ENCODE measurements at regions of chr15 and their contacts with region 1.

Region 1: DNA sequence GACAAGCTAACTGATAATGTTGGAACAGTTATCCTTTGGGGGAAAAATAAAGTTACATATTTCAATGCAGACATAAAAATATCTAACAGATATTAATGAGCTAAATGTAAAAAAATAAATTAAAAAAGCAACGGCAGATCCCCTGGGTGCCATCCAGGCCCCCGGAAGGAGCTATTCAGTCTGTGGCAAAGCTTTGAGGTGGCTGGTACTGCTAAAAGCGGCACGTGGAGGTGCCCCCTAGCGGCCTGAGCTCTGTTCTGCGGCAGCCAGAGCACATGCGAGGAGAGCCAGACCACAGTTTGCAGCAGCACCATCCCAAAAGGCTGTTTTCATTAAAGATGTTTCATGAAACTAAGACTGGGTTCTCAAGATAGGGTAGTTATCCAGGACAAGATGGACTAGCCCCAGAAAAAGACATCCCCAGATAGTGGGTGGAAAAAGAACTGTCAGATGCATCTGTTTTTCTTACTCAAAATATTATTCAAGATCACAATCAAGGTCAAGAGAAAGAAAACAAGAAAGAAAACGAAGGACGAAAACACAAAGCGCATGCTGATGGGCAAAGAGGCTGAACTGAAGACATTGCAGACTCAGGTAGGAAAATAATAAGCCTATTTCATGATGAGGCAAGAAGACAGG is 18.7 kb downstream of the AP3S2 start:
- DNase-seq: no peak
- ATAC-seq: peak; percentile 100
- H3K4me3 ChIP-seq: no peak overlapping the region
- H3K27ac ChIP-seq: no peak overlapping the region
- H3K4me1 ChIP-seq: no peaks in the 10 kb centered on the region
- H3K27me3 ChIP-seq: no peaks in the 10 kb centered on the region
- CTCF ChIP-seq: peak; percentile 92 to 98 (median 97)
- EP300 ChIP-seq: no peak
- POLR2A ChIP-seq: no peak
- RAD21 ChIP-seq: peak; percentile 84

Region 2: GRCh38 chr15:89740137-89740536 is 134.9 kb before region 1 on chr15:
- CTCF ChIA-PET with region 1: interaction called, 113 read pairs
- POLR2A ChIA-PET with region 1: no interaction called
- RAD21 ChIA-PET with region 1: interaction called, 55 read pairs
- SMC1A ChIA-PET with region 1: interaction called, 24 read pairs
- in situ Hi-C with region 1: no loop called
- intact Hi-C with region 1: loop called (anchors 1 kb)
- DNase-seq: peak; percentile 43
- ATAC-seq: peak; percentile 98
- H3K4me3 ChIP-seq: no peak overlapping the region
- H3K27ac ChIP-seq: no peak overlapping the region
- H3K4me1 ChIP-seq: no peaks in the 10 kb centered on the region
- H3K27me3 ChIP-seq: no peaks in the 10 kb centered on the region
- CTCF ChIP-seq: peak; percentile 86 to 91 (median 91); a peak in 5 of 6 replicates
- EP300 ChIP-seq: no peak
- POLR2A ChIP-seq: no peak
- RAD21 ChIP-seq: peak; percentile 82

Region 3: GRCh38 chr15:89760303-89761008 is 114.6 kb before region 1 on chr15:
- CTCF ChIA-PET with region 1: interaction called, 380 read pairs
- POLR2A ChIA-PET with region 1: interaction called, 7 read pairs
- RAD21 ChIA-PET with region 1: interaction called, 179 read pairs
- SMC1A ChIA-PET with region 1: interaction called, 132 read pairs
- in situ Hi-C with region 1: loop called (anchors 5 kb)
- intact Hi-C with region 1: loop called (anchors 1 kb)
- DNase-seq: no peak
- ATAC-seq: peak; percentile 97
- H3K4me3 ChIP-seq: no peak overlapping the region
- H3K27ac ChIP-seq: no peak overlapping the region
- H3K4me1 ChIP-seq: peaks cover 11% of the 10 kb centered on the region
- H3K27me3 ChIP-seq: no peaks in the 10 kb centered on the region
- CTCF ChIP-seq: peak; percentile 93 to 97 (median 97)
- EP300 ChIP-seq: no peak
- POLR2A ChIP-seq: no peak
- RAD21 ChIP-seq: peak; percentile 94

Region 4: GRCh38 chr15:89781891-89782618 is 93.0 kb before region 1 on chr15:
- CTCF ChIA-PET with region 1: interaction called, 27 read pairs
- POLR2A ChIA-PET with region 1: interaction called, 3 read pairs
- RAD21 ChIA-PET with region 1: interaction called, 15 read pairs
- SMC1A ChIA-PET with region 1: interaction called, 13 read pairs
- in situ Hi-C with region 1: no loop called
- intact Hi-C with region 1: no loop called
- DNase-seq: no peak
- ATAC-seq: peak; percentile 69
- H3K4me3 ChIP-seq: 0 out of 2 replicates have a peak overlapping the region, but pooled peaks have one; percentile 24
- H3K27ac ChIP-seq: no peak overlapping the region
- H3K4me1 ChIP-seq: peaks cover 23% of the 10 kb centered on the region
- H3K27me3 ChIP-seq: no peaks in the 10 kb centered on the region
- CTCF ChIP-seq: no peak
- EP300 ChIP-seq: no peak
- POLR2A ChIP-seq: no peak
- RAD21 ChIP-seq: no peak

Region 5: DNA sequence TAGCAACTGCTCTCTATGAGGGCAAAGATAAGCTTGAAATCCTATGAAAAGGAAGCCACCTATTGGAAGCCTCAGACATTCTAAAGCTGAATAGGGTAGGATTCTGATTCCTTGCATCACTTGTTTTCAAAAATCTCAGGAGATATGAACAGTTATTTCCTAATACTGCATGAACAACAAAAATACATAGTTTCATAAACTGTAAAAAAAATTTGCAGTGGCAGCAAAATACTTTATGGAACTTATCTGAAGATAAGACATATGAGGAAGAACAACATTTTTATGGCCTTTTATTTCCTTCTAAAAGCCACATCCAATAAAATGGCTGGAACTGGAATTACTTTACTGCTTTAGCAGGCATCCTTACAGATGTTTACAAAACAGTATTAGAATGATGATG is 11.1 kb before region 1 on chr15:
- CTCF ChIA-PET with region 1: interaction called, 31 read pairs
- POLR2A ChIA-PET with region 1: no interaction called
- RAD21 ChIA-PET with region 1: interaction called, 7 read pairs
- SMC1A ChIA-PET with region 1: interaction called, 14 read pairs
- in situ Hi-C with region 1: no loop called
- intact Hi-C with region 1: no loop called
- DNase-seq: no peak
- ATAC-seq: no peak
- H3K4me3 ChIP-seq: no peak overlapping the region
- H3K27ac ChIP-seq: no peak overlapping the region
- H3K4me1 ChIP-seq: peaks cover 14% of the 10 kb centered on the region
- H3K27me3 ChIP-seq: no peaks in the 10 kb centered on the region
- CTCF ChIP-seq: no peak
- EP300 ChIP-seq: no peak
- POLR2A ChIP-seq: no peak
- RAD21 ChIP-seq: no peak

Region 6: GRCh38 chr15:89893696-89894455 is 18.8 kb after region 1 on chr15 and contains the start of gene AP3S2:
- CTCF ChIA-PET with region 1: interaction called, 112 read pairs
- POLR2A ChIA-PET with region 1: no interaction called
- RAD21 ChIA-PET with region 1: interaction called, 14 read pairs
- SMC1A ChIA-PET with region 1: interaction called, 15 read pairs
- in situ Hi-C with region 1: no loop called
- intact Hi-C with region 1: no loop called
- DNase-seq: peak; percentile 73
- ATAC-seq: peak; percentile 90
- H3K4me3 ChIP-seq: peak within 1 kb of the TSS; percentile 97
- H3K27ac ChIP-seq: peak within 1 kb of the TSS; percentile 87
- H3K4me1 ChIP-seq: peaks cover 23% of the 10 kb centered on the region
- H3K27me3 ChIP-seq: no peaks in the 10 kb centered on the region
- CTCF ChIP-seq: no peak
- EP300 ChIP-seq: peak in 1 of 2 experiments; percentile 31; a peak in 1 of 4 replicates
- POLR2A ChIP-seq: peak; percentile 92
- RAD21 ChIP-seq: no peak
- polyA plus RNA-seq, gene AP3S2: 10.0 to 13.1 TPM

Region 7: GRCh38 chr15:89958074-89958805 is 83.2 kb after region 1 on chr15:
- CTCF ChIA-PET with region 1: no interaction called
- POLR2A ChIA-PET with region 1: no interaction called
- RAD21 ChIA-PET with region 1: no interaction called
- SMC1A ChIA-PET with region 1: no interaction called
- in situ Hi-C with region 1: no loop called
- intact Hi-C with region 1: no loop called
- DNase-seq: no peak
- ATAC-seq: no peak
- H3K4me3 ChIP-seq: no peak overlapping the region
- H3K27ac ChIP-seq: no peak overlapping the region
- H3K4me1 ChIP-seq: no peaks in the 10 kb centered on the region
- H3K27me3 ChIP-seq: no peaks in the 10 kb centered on the region; a peak in 1 of 4 replicates
- CTCF ChIP-seq: no peak
- EP300 ChIP-seq: no peak
- POLR2A ChIP-seq: no peak
- RAD21 ChIP-seq: no peak

Region 8: DNA sequence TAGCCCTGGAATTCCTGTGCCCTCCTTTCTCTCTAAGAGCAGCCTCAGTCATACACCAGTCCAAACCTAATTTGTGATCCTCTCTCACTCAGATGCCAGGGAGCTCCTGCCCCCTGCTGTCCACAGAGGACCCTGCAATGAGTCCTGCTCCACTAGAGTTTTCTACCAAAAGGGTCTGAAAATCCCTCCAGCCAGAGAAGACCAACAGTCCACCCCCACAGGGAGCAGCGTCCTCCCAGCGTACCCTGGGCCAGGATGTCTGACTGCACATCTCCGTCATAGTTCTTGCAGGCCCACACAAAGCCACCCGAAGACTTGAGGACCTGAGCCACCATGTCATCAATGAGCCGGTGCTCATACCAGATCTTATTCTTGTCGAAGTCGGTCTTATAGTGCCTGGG is 211.8 kb after region 1 on chr15:
- CTCF ChIA-PET with region 1: interaction called, 8 read pairs
- POLR2A ChIA-PET with region 1: no interaction called
- RAD21 ChIA-PET with region 1: interaction called, 3 read pairs
- SMC1A ChIA-PET with region 1: interaction called, 3 read pairs
- in situ Hi-C with region 1: no loop called
- intact Hi-C with region 1: loop called (anchors 5 kb)
- DNase-seq: no peak
- ATAC-seq: peak; percentile 88
- H3K4me3 ChIP-seq: no peak overlapping the region
- H3K27ac ChIP-seq: no peak overlapping the region
- H3K4me1 ChIP-seq: no peaks in the 10 kb centered on the region
- H3K27me3 ChIP-seq: no peaks in the 10 kb centered on the region
- CTCF ChIP-seq: peak; percentile 79 to 87 (median 86)
- EP300 ChIP-seq: no peak
- POLR2A ChIP-seq: no peak
- RAD21 ChIP-seq: peak; percentile 79

Measured in GM12878 (cell line).